ENCODE measurements at regions of chr11 and their contacts with region 1.

Region 1: GRCh38 chr11:128506999-128507611 is 80.3 kb downstream of the ETS1 start:
- DNase-seq: peak in 1 of 5 donors; percentile 77
- H3K4me3 ChIP-seq: peak overlapping the region; percentile 37 to 39
- H3K4me3 Mint-ChIP-seq: peak overlapping the region; percentile 81 to 100 (median 94)
- H3K27ac ChIP-seq: peak overlapping the region; percentile 89
- H3K27ac Mint-ChIP-seq: peak overlapping the region; percentile 92 to 99 (median 98)
- H3K4me1 ChIP-seq: peaks cover 100% of the 10 kb centered on the region
- H3K4me1 Mint-ChIP-seq: peaks cover 80 to 100% (median 89%) of the 10 kb centered on the region in 4 donors
- H3K27me3 ChIP-seq: no peaks in the 10 kb centered on the region
- H3K27me3 Mint-ChIP-seq: no peaks in the 10 kb centered on the region

Region 2: GRCh38 chr11:128195057-128195751 is 311.9 kb before region 1 on chr11:
- CTCF ChIA-PET with region 1: no interaction called
- POLR2A ChIA-PET with region 1: interaction called, 3 read pairs
- intact Hi-C with region 1: loop called (anchors 5 kb)
- DNase-seq: peak; percentile 66 to 78 (median 76)
- H3K4me3 ChIP-seq: no peak overlapping the region
- H3K4me3 Mint-ChIP-seq: peak overlapping the region; percentile 1 to 67 (median 48)
- H3K27ac ChIP-seq: no peak overlapping the region
- H3K27ac Mint-ChIP-seq: peak overlapping the region; percentile 12 to 93 (median 63)
- H3K4me1 ChIP-seq: peaks cover 18% of the 10 kb centered on the region
- H3K4me1 Mint-ChIP-seq: peaks cover 20 to 38% (median 27%) of the 10 kb centered on the region in 4 donors
- H3K27me3 ChIP-seq: no peaks in the 10 kb centered on the region
- H3K27me3 Mint-ChIP-seq: no peaks in the 10 kb centered on the region

Region 3: DNA sequence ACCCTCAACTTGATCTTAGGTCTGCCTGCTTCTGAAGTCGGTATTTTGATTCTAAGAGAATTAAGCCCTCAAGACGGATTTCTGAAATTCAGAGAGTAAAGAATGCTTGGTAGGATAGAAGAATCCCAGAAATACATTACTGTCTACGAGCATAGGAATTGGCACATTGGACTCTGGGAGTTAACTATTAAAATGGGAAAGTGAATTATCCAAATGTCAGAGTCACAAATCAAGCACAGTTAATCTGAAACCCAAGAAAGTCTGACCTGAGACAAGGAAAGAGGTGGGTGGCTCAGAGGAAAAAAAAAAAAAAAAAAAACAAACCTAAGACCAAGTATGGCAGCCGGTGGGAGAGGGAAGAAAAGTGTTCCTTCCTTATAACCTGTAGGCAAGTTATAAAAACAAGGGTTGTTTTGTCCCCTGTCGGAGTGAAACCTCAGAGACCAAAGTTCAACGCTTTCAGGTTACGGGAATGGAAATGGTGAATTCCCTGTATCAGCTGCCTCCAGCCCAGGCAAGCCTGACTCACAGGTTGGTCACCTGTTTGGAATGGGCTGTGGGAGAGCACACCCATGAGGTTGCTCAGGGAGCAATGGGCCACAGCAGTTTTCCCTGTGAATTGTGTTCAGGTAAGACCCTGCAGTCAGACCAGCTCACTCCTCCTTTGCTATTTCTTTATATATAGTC is 58.8 kb before region 1 on chr11:
- CTCF ChIA-PET with region 1: no interaction called
- POLR2A ChIA-PET with region 1: no interaction called
- intact Hi-C with region 1: no loop called
- DNase-seq: peak in 1 of 5 donors; percentile 7
- H3K4me3 ChIP-seq: no peak overlapping the region
- H3K4me3 Mint-ChIP-seq: no peak overlapping the region
- H3K27ac ChIP-seq: no peak overlapping the region
- H3K27ac Mint-ChIP-seq: peak overlapping the region in 4 of 7 donors; percentile 24 to 38 (median 28)
- H3K4me1 ChIP-seq: peaks cover 17% of the 10 kb centered on the region
- H3K4me1 Mint-ChIP-seq: peaks cover 25 to 40% (median 38%) of the 10 kb centered on the region in 4 donors
- H3K27me3 ChIP-seq: no peaks in the 10 kb centered on the region
- H3K27me3 Mint-ChIP-seq: no peaks in the 10 kb centered on the region

Region 4: DNA sequence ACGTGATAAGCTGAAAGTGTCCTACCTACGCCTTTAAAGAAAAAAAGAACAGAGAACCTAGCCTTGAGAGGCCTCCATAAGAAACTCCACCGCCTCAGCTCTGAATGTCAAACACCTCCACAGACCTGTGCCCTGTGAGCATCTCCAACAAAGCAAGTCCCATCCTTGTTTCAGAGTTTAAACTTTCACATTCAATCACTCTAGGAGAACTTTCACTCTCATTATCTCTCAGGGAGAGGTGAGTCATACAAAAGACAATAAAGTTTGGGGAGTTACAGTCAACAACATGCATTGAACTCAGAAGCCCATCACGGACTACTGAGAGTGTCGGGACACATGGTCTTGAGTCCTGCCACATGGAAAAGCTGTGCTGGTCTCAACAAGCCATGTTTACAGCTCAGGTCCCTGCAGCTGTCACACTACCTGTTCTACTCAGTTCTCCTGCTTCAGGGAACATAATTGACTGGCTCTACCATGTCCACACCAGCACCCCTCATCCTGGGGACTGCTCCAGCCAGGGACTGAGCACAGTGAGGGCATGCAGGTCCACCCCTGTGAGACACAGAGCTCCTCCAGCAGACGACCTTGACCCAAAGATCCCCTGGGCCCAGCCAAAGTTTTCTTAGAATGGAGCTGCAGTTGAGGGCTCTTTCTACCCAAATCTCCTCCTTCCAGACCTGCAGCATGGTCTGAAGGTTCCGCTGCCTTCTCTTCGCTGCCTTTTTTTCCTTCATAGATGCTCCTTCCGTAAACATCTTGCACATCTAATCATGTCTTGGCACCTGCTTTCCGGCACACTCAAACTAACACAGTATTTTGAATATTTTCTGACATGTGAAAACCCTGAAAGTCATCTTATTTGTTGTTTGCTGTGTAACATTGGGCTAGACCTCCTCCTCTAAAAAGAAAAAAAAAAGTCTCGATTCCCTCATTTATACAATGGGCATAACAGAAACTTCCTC is 34.7 kb before region 1 on chr11:
- CTCF ChIA-PET with region 1: interaction called, 11 read pairs
- POLR2A ChIA-PET with region 1: interaction called, 1,488 read pairs
- intact Hi-C with region 1: loop called (anchors 5 kb)
- DNase-seq: peak in 4 of 5 donors; percentile 51 to 82 (median 57)
- H3K4me3 ChIP-seq: peak overlapping the region; percentile 5 to 27
- H3K4me3 Mint-ChIP-seq: peak overlapping the region; percentile 70 to 93 (median 84)
- H3K27ac ChIP-seq: peak overlapping the region; percentile 94
- H3K27ac Mint-ChIP-seq: peak overlapping the region; percentile 98 to 99 (median 99)
- H3K4me1 ChIP-seq: peaks cover 100% of the 10 kb centered on the region
- H3K4me1 Mint-ChIP-seq: peaks cover 85 to 98% (median 92%) of the 10 kb centered on the region in 4 donors
- H3K27me3 ChIP-seq: no peaks in the 10 kb centered on the region
- H3K27me3 Mint-ChIP-seq: no peaks in the 10 kb centered on the region

Region 5: GRCh38 chr11:128482512-128483191 is 24.5 kb before region 1 on chr11:
- CTCF ChIA-PET with region 1: interaction called, 16 read pairs
- POLR2A ChIA-PET with region 1: interaction called, 1,488 read pairs
- intact Hi-C with region 1: no loop called
- DNase-seq: peak; percentile 68 to 88 (median 72)
- H3K4me3 ChIP-seq: peak overlapping the region; percentile 27 to 47
- H3K4me3 Mint-ChIP-seq: peak overlapping the region; percentile 73 to 92 (median 81)
- H3K27ac ChIP-seq: peak overlapping the region; percentile 94
- H3K27ac Mint-ChIP-seq: peak overlapping the region; percentile 88 to 99 (median 99)
- H3K4me1 ChIP-seq: peaks cover 99% of the 10 kb centered on the region
- H3K4me1 Mint-ChIP-seq: peaks cover 86 to 98% (median 93%) of the 10 kb centered on the region in 4 donors
- H3K27me3 ChIP-seq: no peaks in the 10 kb centered on the region
- H3K27me3 Mint-ChIP-seq: no peaks in the 10 kb centered on the region

Region 6: GRCh38 chr11:128488471-128488870 is 18.6 kb before region 1 on chr11:
- CTCF ChIA-PET with region 1: interaction called, 50 read pairs
- POLR2A ChIA-PET with region 1: interaction called, 1,148 read pairs
- intact Hi-C with region 1: no loop called
- DNase-seq: peak in 1 of 5 donors; percentile 85
- H3K4me3 ChIP-seq: peak overlapping the region in 1 of 2 donors; percentile 11
- H3K4me3 Mint-ChIP-seq: peak overlapping the region; percentile 10 to 81 (median 68)
- H3K27ac ChIP-seq: peak overlapping the region; percentile 89
- H3K27ac Mint-ChIP-seq: peak overlapping the region; percentile 90 to 99 (median 97)
- H3K4me1 ChIP-seq: peaks cover 99% of the 10 kb centered on the region
- H3K4me1 Mint-ChIP-seq: peaks cover 92 to 99% (median 95%) of the 10 kb centered on the region in 4 donors
- H3K27me3 ChIP-seq: no peaks in the 10 kb centered on the region
- H3K27me3 Mint-ChIP-seq: no peaks in the 10 kb centered on the region

Region 7: DNA sequence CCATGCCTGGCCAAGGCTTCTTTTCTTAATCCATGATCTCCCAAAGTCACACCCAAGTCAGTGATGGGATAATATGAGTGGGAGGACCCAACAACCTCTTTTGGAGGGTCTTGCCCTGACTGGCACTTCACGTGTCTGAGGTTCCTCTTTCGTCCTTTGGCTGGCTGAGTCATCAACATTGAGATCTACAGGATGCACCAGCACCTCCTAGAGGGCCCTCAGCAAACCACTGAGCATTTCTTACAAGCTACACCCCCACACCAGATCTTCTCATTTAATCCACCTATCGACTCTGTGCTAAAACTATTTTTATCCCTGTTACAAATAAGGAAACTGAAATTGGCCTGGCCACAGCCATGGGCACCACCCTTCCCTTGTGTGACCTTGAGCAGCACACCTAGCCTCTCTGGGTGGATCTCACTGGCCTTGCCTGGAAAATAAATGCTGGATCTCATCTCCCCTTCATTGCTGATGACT is 250.2 kb after region 1 on chr11:
- CTCF ChIA-PET with region 1: interaction called, 3 read pairs
- POLR2A ChIA-PET with region 1: no interaction called
- intact Hi-C with region 1: loop called (anchors 5 kb)
- DNase-seq: peak; percentile 64 to 85 (median 72)
- H3K4me3 ChIP-seq: no peak overlapping the region
- H3K4me3 Mint-ChIP-seq: peak overlapping the region in 6 of 8 donors; percentile 8 to 82 (median 54)
- H3K27ac ChIP-seq: peak overlapping the region; percentile 34
- H3K27ac Mint-ChIP-seq: peak overlapping the region; percentile 77 to 96 (median 94)
- H3K4me1 ChIP-seq: peaks cover 70% of the 10 kb centered on the region
- H3K4me1 Mint-ChIP-seq: peaks cover 59 to 87% (median 76%) of the 10 kb centered on the region in 4 donors
- H3K27me3 ChIP-seq: no peaks in the 10 kb centered on the region
- H3K27me3 Mint-ChIP-seq: no peaks in the 10 kb centered on the region

Measured in CD4-positive, alpha-beta memory T cell (primary cell).